CD8-positive, alpha-beta memory T cell (primary cell): ENCODE measurements at regions of chr2 and their contacts with region 1.

Region 1: DNA sequence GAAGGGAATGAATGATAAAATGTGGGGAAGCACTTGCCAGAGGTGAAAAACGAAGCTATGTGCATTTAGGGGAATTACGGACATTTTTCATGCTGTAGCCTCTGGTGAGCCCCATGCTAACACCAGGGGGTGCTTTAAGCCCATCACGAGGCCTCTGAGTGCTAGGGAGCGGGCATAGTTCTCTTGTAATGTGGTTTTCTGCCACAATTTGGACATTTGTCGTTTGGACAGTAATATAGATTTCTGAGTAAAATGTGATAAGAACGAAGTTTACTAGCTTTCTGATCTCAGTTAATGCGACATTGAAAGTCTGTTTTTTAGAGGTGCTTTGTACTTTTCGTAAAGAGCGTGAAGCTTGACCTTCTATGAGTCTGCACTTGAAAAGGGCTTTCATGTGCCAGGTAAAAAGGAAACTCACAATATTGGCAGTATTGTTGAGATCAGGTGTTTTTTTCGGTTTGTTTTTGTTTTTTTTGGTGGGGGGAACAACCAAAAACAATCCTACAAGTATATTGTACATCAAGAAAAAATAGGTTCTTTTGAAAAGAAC is 50.6 kb downstream of the TRAF3IP1 start:
- DNase-seq: peak in 4 of 5 donors; percentile 21 to 47 (median 40)
- H3K4me3 ChIP-seq: no peak overlapping the region
- H3K4me3 Mint-ChIP-seq: no peak overlapping the region
- H3K27ac ChIP-seq: no peak overlapping the region
- H3K27ac Mint-ChIP-seq: peak overlapping the region in 2 of 8 donors; percentile 29 to 49
- H3K4me1 ChIP-seq: no peaks in the 10 kb centered on the region
- H3K4me1 Mint-ChIP-seq: peaks cover 0 to 8% (median 4%) of the 10 kb centered on the region in 3 donors
- H3K27me3 ChIP-seq: no peaks in the 10 kb centered on the region
- H3K27me3 Mint-ChIP-seq: no peaks in the 10 kb centered on the region

Region 2: GRCh38 chr2:238438856-238439849 is 68.3 kb after region 1 on chr2:
- CTCF ChIA-PET with region 1: no interaction called
- POLR2A ChIA-PET with region 1: no interaction called
- DNase-seq: peak in 1 of 5 donors; percentile 14
- H3K4me3 ChIP-seq: no peak overlapping the region
- H3K4me3 Mint-ChIP-seq: peak overlapping the region; percentile 38 to 74 (median 67)
- H3K27ac ChIP-seq: no peak overlapping the region
- H3K27ac Mint-ChIP-seq: peak overlapping the region; percentile 21 to 89 (median 78)
- H3K4me1 ChIP-seq: peaks cover 11% of the 10 kb centered on the region
- H3K4me1 Mint-ChIP-seq: peaks cover 62 to 84% (median 83%) of the 10 kb centered on the region in 3 donors
- H3K27me3 ChIP-seq: no peaks in the 10 kb centered on the region
- H3K27me3 Mint-ChIP-seq: no peaks in the 10 kb centered on the region

Region 3: GRCh38 chr2:238459081-238459629 is 88.3 kb after region 1 on chr2:
- CTCF ChIA-PET with region 1: interaction called, 19 read pairs
- POLR2A ChIA-PET with region 1: no interaction called
- DNase-seq: no peak
- H3K4me3 ChIP-seq: no peak overlapping the region
- H3K4me3 Mint-ChIP-seq: no peak overlapping the region
- H3K27ac ChIP-seq: no peak overlapping the region
- H3K27ac Mint-ChIP-seq: no peak overlapping the region
- H3K4me1 ChIP-seq: no peaks in the 10 kb centered on the region
- H3K4me1 Mint-ChIP-seq: peaks cover 0 to 5% (median 4%) of the 10 kb centered on the region in 3 donors
- H3K27me3 ChIP-seq: no peaks in the 10 kb centered on the region
- H3K27me3 Mint-ChIP-seq: peaks cover 0 to 2% of the 10 kb centered on the region in 2 donors

Region 4: DNA sequence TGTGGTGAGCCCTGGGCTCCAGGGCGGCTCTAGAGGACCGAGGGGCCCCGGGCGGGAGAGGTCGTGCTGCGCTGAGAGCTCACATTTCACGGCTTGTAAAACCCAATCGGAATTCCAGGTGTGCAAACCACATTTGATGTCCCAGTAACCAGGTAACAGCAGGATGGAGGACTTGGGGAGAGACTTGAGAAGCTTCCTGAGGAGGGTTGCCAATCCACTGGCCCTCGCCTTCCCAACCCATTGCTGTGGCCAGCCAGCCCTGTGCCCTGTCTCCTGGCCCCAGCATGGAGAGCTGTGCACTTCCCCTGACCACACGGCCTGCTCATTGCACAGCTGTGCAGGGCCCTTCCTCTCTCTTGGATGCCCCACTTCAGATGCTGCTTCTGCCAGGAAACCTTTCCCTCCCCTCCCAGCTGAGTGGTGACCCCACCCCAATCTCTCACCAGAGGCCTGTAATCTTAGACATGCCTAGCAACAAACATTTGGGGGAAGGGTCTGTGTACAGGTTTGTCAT is 95.4 kb after region 1 on chr2:
- CTCF ChIA-PET with region 1: interaction called, 19 read pairs
- POLR2A ChIA-PET with region 1: no interaction called
- DNase-seq: no peak
- H3K4me3 ChIP-seq: no peak overlapping the region
- H3K4me3 Mint-ChIP-seq: no peak overlapping the region
- H3K27ac ChIP-seq: no peak overlapping the region
- H3K27ac Mint-ChIP-seq: no peak overlapping the region
- H3K4me1 ChIP-seq: no peaks in the 10 kb centered on the region
- H3K4me1 Mint-ChIP-seq: peaks cover 0 to 5% (median 4%) of the 10 kb centered on the region in 3 donors
- H3K27me3 ChIP-seq: no peaks in the 10 kb centered on the region
- H3K27me3 Mint-ChIP-seq: peaks cover 0 to 4% of the 10 kb centered on the region in 2 donors

Region 5: GRCh38 chr2:238657132-238658053 is 286.5 kb after region 1 on chr2:
- CTCF ChIA-PET with region 1: no interaction called
- POLR2A ChIA-PET with region 1: no interaction called
- DNase-seq: no peak
- H3K4me3 ChIP-seq: no peak overlapping the region
- H3K4me3 Mint-ChIP-seq: no peak overlapping the region
- H3K27ac ChIP-seq: no peak overlapping the region
- H3K27ac Mint-ChIP-seq: no peak overlapping the region
- H3K4me1 ChIP-seq: no peaks in the 10 kb centered on the region
- H3K4me1 Mint-ChIP-seq: no peaks in the 10 kb centered on the region
- H3K27me3 ChIP-seq: no peaks in the 10 kb centered on the region
- H3K27me3 Mint-ChIP-seq: peaks cover 5 to 9% of the 10 kb centered on the region in 2 donors